ENCODE measurements at regions of chr21 and their contacts with region 1.

Region 1: GRCh38 chr21:34135330-34135729 is 62.0 kb downstream of the MRPS6 start:
- DNase-seq: no peak
- H3K4me3 ChIP-seq: no peak overlapping the region
- H3K27ac ChIP-seq: no peak overlapping the region
- H3K4me1 ChIP-seq: peaks cover 10% of the 10 kb centered on the region
- H3K27me3 ChIP-seq: no peaks in the 10 kb centered on the region
- CTCF ChIP-seq: no peak

Region 2: DNA sequence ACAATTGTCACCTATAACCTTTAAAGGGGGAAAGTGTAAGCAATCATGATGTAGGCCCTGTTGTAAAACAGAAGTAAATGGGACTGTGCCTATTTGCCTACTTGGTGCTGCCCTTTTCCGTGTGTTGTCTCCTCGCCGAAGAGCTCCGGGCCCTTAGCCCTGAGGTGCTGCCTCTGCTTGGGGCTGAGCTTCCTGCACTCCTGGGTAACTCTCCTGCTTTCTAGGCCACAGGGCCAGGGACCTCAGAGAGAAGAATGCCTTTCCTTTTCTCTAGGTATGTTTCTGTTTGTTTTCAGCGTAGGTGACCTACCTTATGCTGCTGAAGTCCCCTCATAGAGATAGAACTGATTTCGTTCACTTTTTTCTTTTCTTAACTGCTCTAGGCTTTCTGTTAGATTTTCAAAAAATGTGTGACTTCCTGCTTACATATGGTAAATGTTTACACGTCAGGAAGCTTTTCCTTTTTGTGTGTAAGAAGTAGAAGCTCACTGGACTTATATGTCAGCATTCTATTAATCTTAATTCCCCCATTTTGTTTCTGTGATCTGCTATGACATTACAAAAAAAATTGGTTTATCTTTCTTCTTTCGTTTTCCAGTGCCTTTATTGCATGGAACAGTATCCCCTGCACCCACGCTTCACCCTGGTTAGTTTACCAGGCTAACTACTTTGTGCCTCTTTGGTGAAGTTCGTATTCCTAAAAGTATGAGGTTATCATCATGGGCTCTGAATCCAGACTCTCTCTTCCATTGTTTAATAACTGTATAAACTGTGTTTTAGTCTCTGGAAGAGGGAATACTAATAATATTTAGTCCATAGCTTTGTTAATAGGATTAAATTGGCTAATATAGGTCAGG is 431.4 kb before region 1 on chr21:
- CTCF ChIA-PET with region 1: no interaction called
- POLR2A ChIA-PET with region 1: interaction called, 31 read pairs
- intact Hi-C with region 1: no loop called
- DNase-seq: no peak
- H3K4me3 ChIP-seq: no peak overlapping the region
- H3K27ac ChIP-seq: peak overlapping the region; percentile 12
- H3K4me1 ChIP-seq: no peaks in the 10 kb centered on the region
- H3K27me3 ChIP-seq: no peaks in the 10 kb centered on the region
- CTCF ChIP-seq: no peak

Region 3: DNA sequence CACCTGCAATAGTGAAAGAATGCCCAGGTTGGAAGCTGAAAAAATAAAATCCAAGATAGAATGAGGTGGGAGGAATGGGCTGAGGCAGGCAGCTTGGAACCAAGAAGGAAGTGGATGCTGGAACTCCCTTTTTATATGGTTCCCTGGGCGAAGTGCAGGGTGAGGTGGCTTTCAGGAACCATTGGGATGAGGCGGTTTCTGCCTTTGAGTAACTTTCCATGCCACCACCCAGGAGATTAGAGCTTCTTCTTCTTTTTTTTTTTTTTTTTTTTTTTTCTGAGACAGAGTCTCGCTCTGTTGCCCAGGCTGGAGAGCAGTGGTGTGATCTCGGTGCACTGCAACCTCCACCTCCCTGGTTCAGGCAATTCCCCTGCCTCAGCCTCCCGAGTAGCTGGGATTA is 79.7 kb before region 1 on chr21:
- CTCF ChIA-PET with region 1: no interaction called
- POLR2A ChIA-PET with region 1: interaction called, 12 read pairs
- intact Hi-C with region 1: no loop called
- DNase-seq: no peak
- H3K4me3 ChIP-seq: no peak overlapping the region
- H3K27ac ChIP-seq: no peak overlapping the region
- H3K4me1 ChIP-seq: no peaks in the 10 kb centered on the region
- H3K27me3 ChIP-seq: no peaks in the 10 kb centered on the region
- CTCF ChIP-seq: no peak

Region 4: GRCh38 chr21:34707876-34708325 is 572.6 kb after region 1 on chr21:
- CTCF ChIA-PET with region 1: no interaction called
- POLR2A ChIA-PET with region 1: no interaction called
- intact Hi-C with region 1: no loop called
- DNase-seq: no peak
- H3K4me3 ChIP-seq: no peak overlapping the region
- H3K27ac ChIP-seq: no peak overlapping the region
- H3K4me1 ChIP-seq: peaks cover 10% of the 10 kb centered on the region
- H3K27me3 ChIP-seq: no peaks in the 10 kb centered on the region
- CTCF ChIP-seq: no peak

Measured in A673 (cell line).